ENCODE measurements at regions of chr10 and their contacts with region 1.

Region 1: GRCh38 chr10:102917962-102918816 is at the start of gene CNNM2:
- DNase-seq: peak; percentile 100
- ATAC-seq: peak; percentile 94
- H3K4me3 ChIP-seq: peak within 1 kb of the TSS; percentile 88 to 97
- H3K27ac ChIP-seq: peak within 1 kb of the TSS; percentile 86 to 96 (median 92)
- H3K4me1 ChIP-seq: peaks cover 46% of the 10 kb centered on the region
- H3K27me3 ChIP-seq: no peaks in the 10 kb centered on the region
- CTCF ChIP-seq: peak in 2 of 7 experiments; percentile 16 to 39
- POLR2A ChIP-seq: peak; percentile 47 to 62 (median 54)
- total RNA-seq, gene CNNM2: 3.4 to 5.3 TPM

Region 2: GRCh38 chr10:102408728-102409603 is 509.2 kb before region 1 on chr10:
- intact Hi-C with region 1: no loop called
- DNase-seq: peak in 2 of 4 donors; percentile 40 to 47
- ATAC-seq: peak; percentile 24
- H3K4me3 ChIP-seq: peak overlapping the region in 1 of 2 donors; percentile 12
- H3K27ac ChIP-seq: no peak overlapping the region
- H3K4me1 ChIP-seq: peaks cover 20% of the 10 kb centered on the region
- H3K27me3 ChIP-seq: peaks cover 0 to 35% of the 10 kb centered on the region in 2 donors
- CTCF ChIP-seq: no peak
- POLR2A ChIP-seq: peak in 1 of 3 donors; percentile 21

Region 3: DNA sequence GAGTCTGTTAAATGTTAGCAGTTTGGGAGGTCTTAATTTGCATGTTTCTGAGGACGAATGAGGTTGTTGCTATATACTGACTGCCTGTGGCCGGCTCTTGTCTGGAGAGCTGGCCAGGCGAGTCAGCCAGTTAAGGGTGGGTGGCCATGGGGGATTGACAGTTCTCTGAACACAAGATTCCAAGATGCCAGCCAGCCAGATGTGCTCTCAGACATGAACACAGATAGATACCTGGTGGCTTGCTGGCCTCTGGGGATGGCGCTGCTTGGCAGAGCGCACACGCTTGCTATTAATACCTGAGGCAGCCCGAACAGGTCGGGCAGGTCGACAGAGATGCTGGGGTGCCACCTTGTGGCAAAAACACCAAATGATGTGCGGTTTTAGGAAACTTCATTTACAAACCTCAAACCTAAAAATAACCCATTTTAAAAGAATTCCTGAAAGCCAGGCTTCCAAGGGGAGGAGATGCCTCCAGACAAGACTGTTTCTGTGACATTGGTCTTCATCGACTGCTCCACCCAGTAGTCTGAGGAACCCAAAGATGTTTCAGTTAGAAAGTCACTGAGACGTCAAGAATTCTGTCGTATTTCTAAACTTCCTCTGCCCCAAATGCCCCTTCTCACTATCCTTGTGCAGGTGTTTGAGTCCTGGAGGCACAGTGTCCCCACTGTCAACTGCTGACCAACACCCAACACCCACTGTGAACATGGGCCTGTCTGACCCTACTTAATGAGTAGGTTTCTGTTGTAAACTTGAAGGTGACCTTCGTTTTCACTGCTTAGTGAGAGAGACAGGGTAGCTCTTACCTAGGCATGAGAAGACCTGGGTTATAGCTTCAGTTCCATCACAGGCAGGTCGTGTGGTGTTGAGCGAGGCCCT is 151.5 kb after region 1 on chr10:
- intact Hi-C with region 1: loop called (anchors 5 kb)
- DNase-seq: peak; percentile 74 to 84 (median 77)
- ATAC-seq: peak; percentile 79
- H3K4me3 ChIP-seq: no peak overlapping the region
- H3K27ac ChIP-seq: no peak overlapping the region
- H3K4me1 ChIP-seq: no peaks in the 10 kb centered on the region
- H3K27me3 ChIP-seq: no peaks in the 10 kb centered on the region
- CTCF ChIP-seq: peak; percentile 44 to 85 (median 73)
- POLR2A ChIP-seq: no peak

Region 4: GRCh38 chr10:103145860-103146466 is 227.8 kb after region 1 on chr10:
- intact Hi-C with region 1: no loop called
- DNase-seq: peak; percentile 70 to 82 (median 80)
- ATAC-seq: peak; percentile 75
- H3K4me3 ChIP-seq: no peak overlapping the region
- H3K27ac ChIP-seq: peak overlapping the region in 3 of 4 donors; percentile 20 to 58 (median 28)
- H3K4me1 ChIP-seq: peaks cover 23% of the 10 kb centered on the region
- H3K27me3 ChIP-seq: no peaks in the 10 kb centered on the region
- CTCF ChIP-seq: no peak
- POLR2A ChIP-seq: no peak

Region 5: DNA sequence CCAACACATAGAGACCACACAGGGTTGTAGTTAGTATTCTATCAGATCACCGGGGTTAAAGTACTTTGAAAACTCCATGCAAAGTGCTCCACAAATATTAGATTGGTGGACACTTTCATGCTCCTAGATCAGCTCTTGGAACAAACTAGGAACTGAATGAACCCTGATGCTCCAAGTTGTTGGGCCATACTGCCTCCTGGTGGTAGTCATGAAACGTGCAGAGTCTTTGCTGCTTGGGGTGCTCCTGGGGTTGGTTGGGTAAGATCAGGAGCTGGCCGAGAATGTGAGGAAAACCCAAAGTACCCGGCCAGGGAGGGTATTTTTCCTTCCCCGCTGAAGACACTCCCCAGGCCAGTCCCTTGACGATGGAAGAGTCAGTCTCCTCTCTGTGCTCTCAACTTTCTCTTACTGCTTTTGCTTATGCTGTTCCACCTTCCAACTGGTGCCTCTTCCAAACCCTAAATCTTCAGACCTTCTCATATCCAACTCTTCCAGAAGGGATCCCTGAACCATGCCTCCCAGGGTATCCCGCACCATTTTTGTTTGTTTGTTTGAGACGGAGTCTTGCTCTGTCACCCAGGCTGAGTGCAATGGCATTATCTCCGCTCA is 326.6 kb after region 1 on chr10:
- intact Hi-C with region 1: loop called (anchors 5 kb)
- DNase-seq: peak; percentile 80 to 83 (median 80)
- ATAC-seq: peak; percentile 74
- H3K4me3 ChIP-seq: no peak overlapping the region
- H3K27ac ChIP-seq: no peak overlapping the region
- H3K4me1 ChIP-seq: peaks cover 18% of the 10 kb centered on the region
- H3K27me3 ChIP-seq: no peaks in the 10 kb centered on the region
- CTCF ChIP-seq: peak; percentile 47 to 92 (median 89)
- POLR2A ChIP-seq: no peak